IMR-90 (cell line): ENCODE measurements at regions of chr3 and their contacts with region 1.

Region 1: DNA sequence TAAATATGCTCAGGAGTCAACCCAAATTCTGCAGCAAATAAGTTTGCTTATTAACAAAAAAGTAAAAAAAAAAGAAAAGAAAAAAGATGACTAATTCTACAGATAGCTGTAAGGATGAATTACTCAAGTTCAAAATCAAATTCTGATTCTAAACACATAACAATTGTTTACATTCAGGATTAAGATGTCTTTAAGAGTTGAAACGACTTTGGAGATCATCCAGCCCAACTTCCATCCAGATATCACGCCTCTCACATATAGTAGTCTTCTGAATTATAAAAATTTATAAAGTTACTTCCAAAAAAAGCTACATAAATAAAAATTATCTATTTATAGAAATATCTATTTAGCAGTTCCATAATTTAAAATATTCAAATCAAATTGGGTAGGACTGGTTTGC is 39.8 kb downstream of the GYG1 start:
- DNase-seq: no peak
- ATAC-seq: no peak; the same call in 1 of the 2 replicates
- H3K4me3 ChIP-seq: no peak overlapping the region
- H3K27ac ChIP-seq: no peak overlapping the region
- H3K4me1 ChIP-seq: peaks cover 7% of the 10 kb centered on the region
- H3K27me3 ChIP-seq: no peaks in the 10 kb centered on the region
- CTCF ChIP-seq: no peak
- POLR2A ChIP-seq: no peak
- RAD21 ChIP-seq: no peak

Region 2: GRCh38 chr3:148778926-148779325 is 252.2 kb before region 1 on chr3:
- CTCF ChIA-PET with region 1: no interaction called
- POLR2A ChIA-PET with region 1: no interaction called
- dilution Hi-C with region 1: no loop called
- in situ Hi-C with region 1: no loop called
- intact Hi-C with region 1: no loop called
- DNase-seq: no peak
- ATAC-seq: no peak
- H3K4me3 ChIP-seq: no peak overlapping the region
- H3K27ac ChIP-seq: no peak overlapping the region
- H3K4me1 ChIP-seq: no peaks in the 10 kb centered on the region
- H3K27me3 ChIP-seq: no peaks in the 10 kb centered on the region
- CTCF ChIP-seq: no peak
- POLR2A ChIP-seq: no peak
- RAD21 ChIP-seq: no peak

Region 3: GRCh38 chr3:148991194-148992026 is 39.7 kb before region 1 on chr3 and contains the start of gene GYG1:
- CTCF ChIA-PET with region 1: interaction called, 3 read pairs
- POLR2A ChIA-PET with region 1: no interaction called
- dilution Hi-C with region 1: no loop called
- in situ Hi-C with region 1: no loop called
- intact Hi-C with region 1: loop called (anchors 5 kb)
- DNase-seq: peak; percentile 80
- ATAC-seq: peak; percentile 91
- H3K4me3 ChIP-seq: peak within 1 kb of the TSS; percentile 63
- H3K27ac ChIP-seq: peak within 1 kb of the TSS; percentile 83
- H3K4me1 ChIP-seq: peaks cover 15% of the 10 kb centered on the region
- H3K27me3 ChIP-seq: no peaks in the 10 kb centered on the region
- CTCF ChIP-seq: peak; percentile 28; the same call in 1 of the 2 replicates
- POLR2A ChIP-seq: peak; percentile 89
- RAD21 ChIP-seq: peak; percentile 18; the same call in 1 of the 2 replicates
- total RNA-seq, gene GYG1: 77.8 and 90.3 TPM in 2 replicates

Region 4: GRCh38 chr3:149067883-149068282 is 36.8 kb after region 1 on chr3:
- CTCF ChIA-PET with region 1: no interaction called
- POLR2A ChIA-PET with region 1: no interaction called
- dilution Hi-C with region 1: no loop called
- in situ Hi-C with region 1: no loop called
- intact Hi-C with region 1: loop called (anchors 5 kb)
- DNase-seq: no peak
- ATAC-seq: no peak
- H3K4me3 ChIP-seq: no peak overlapping the region
- H3K27ac ChIP-seq: no peak overlapping the region
- H3K4me1 ChIP-seq: no peaks in the 10 kb centered on the region
- H3K27me3 ChIP-seq: no peaks in the 10 kb centered on the region
- CTCF ChIP-seq: no peak
- POLR2A ChIP-seq: no peak
- RAD21 ChIP-seq: no peak